BJ (cell line): ENCODE measurements at regions of chr9 and their contacts with region 1.

Region 1: DNA sequence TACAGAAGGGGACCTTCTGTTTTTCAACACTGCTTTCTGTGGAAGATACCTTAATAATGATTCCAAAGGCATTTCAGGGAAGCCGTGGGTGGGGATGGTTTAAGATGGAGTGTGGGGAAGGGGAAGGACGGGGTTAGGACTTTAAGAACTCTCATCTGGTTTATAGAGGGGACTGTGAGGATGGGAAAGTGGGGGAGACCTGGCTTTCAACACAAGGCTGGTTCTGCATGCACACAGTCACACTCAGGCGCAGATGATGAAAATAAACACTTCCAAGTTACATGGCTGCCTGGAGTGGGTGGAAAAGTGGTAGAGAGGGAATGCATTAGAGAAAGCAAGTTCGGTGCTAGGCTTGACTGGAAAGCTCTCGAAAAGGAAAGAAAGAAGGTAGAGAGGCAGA is 4.9 kb downstream of the MSANTD3 start:
- DNase-seq: no peak
- H3K4me3 ChIP-seq: no peak overlapping the region
- H3K27me3 ChIP-seq: no peaks in the 10 kb centered on the region
- CTCF ChIP-seq: no peak

Region 2: GRCh38 chr9:100445903-100446549 is 14.1 kb after region 1 on chr9:
- CTCF ChIA-PET with region 1: interaction called, 8 read pairs
- POLR2A ChIA-PET with region 1: interaction called, 16 read pairs
- DNase-seq: no peak
- H3K4me3 ChIP-seq: no peak overlapping the region
- H3K27me3 ChIP-seq: no peaks in the 10 kb centered on the region
- CTCF ChIP-seq: no peak